Activated CD4-positive, alpha-beta memory T cell treated with anti-CD3 and anti-CD28 coated beads, Interleukin-2, amount 10 ng/mL, durations not matched to agents 7 days and 5 days (primary cell): ENCODE measurements at regions of chr6 and their contacts with region 1.

Region 1: DNA sequence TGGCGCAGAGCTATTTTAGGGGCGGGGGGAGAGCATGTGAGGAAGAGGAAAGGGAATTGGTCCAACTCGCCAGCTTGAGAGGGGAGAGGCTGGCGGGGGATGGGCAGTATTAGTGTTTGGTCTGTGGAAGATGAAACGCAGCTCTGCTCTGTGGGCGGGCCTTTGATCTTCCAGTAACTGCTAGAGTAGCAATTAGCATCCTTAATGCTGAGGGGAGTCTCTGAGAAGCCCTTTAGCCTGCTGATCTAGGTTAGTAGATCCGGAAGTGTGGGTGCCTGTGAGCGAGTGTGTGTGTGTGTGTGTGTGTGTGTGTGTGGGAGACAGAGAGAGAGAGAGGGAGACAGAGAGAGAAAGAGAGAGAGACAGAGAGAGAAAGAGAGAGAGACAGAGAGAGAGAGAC is 117.2 kb upstream of the BACH2 start:
- DNase-seq: peak; percentile 88
- H3K4me3 Mint-ChIP-seq: peak overlapping the region; percentile 82
- H3K27ac Mint-ChIP-seq: peak overlapping the region; percentile 97
- H3K4me1 Mint-ChIP-seq: peaks cover 86% of the 10 kb centered on the region
- H3K27me3 Mint-ChIP-seq: peaks cover 2% of the 10 kb centered on the region

Region 2: GRCh38 chr6:90256698-90257485 is 157.0 kb before region 1 on chr6:
- CTCF ChIA-PET with region 1: no interaction called
- POLR2A ChIA-PET with region 1: no interaction called
- DNase-seq: peak; percentile 35
- H3K4me3 Mint-ChIP-seq: no peak overlapping the region
- H3K27ac Mint-ChIP-seq: peak overlapping the region; percentile 63
- H3K4me1 Mint-ChIP-seq: peaks cover 32% of the 10 kb centered on the region
- H3K27me3 Mint-ChIP-seq: no peaks in the 10 kb centered on the region

Region 3: GRCh38 chr6:90296346-90297114 is 117.3 kb before region 1 on chr6 and contains the start of gene BACH2:
- CTCF ChIA-PET with region 1: no interaction called
- POLR2A ChIA-PET with region 1: interaction called, 20 read pairs
- DNase-seq: peak; percentile 95
- H3K4me3 Mint-ChIP-seq: peak within 1 kb of the TSS; percentile 87
- H3K27ac Mint-ChIP-seq: peak within 1 kb of the TSS; percentile 82
- H3K4me1 Mint-ChIP-seq: peaks cover 27% of the 10 kb centered on the region
- H3K27me3 Mint-ChIP-seq: peaks cover 44% of the 10 kb centered on the region
- total RNA-seq, gene BACH2: 30.3 to 31.1 TPM

Region 4: DNA sequence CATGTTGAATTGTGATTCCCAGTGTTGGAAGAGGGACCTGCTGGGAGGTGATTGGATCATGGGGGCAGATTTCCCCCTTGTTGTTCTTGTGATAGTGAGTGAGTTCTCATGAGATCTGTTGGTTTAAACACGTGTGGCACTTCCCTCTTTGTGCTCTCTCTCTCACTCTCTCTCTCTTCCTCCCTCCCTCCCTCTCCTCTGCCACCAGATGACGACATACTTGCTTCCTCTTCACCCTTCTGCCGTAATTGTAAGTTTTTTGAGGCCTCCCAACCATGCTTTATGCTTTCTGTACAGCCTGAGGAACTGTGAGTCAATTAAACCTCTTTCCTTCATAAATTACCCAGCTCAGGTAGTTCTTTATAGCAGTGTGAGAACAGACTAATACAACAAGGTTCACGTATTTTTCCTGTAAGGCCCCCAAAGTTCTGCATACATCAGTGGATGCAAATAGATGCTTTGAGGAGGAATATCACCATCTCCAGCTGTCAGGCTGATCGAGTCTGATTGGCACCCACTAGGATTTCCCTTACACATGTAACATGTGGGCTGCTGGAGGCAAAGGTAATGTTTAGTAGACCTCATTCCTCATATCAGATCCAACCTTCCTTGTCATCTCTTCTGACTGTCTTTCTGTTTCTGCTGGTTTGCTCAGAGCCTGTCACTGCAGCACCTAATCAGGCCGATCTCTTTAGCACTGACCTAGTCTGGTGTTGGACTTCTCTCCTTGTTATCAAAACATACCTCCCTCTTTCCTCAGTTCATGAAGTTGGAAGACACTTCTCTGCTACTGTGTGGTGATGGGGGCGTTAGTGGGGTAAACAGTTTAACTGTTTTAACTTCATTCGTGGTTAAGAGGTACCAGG is 62.9 kb before region 1 on chr6:
- CTCF ChIA-PET with region 1: no interaction called
- POLR2A ChIA-PET with region 1: no interaction called
- DNase-seq: peak; percentile 53
- H3K4me3 Mint-ChIP-seq: no peak overlapping the region
- H3K27ac Mint-ChIP-seq: peak overlapping the region; percentile 57
- H3K4me1 Mint-ChIP-seq: peaks cover 21% of the 10 kb centered on the region
- H3K27me3 Mint-ChIP-seq: peaks cover 23% of the 10 kb centered on the region

Region 5: GRCh38 chr6:90403489-90404381 is 10.1 kb before region 1 on chr6:
- CTCF ChIA-PET with region 1: interaction called, 94 read pairs
- POLR2A ChIA-PET with region 1: interaction called, 233 read pairs
- DNase-seq: no peak
- H3K4me3 Mint-ChIP-seq: peak overlapping the region; percentile 10
- H3K27ac Mint-ChIP-seq: peak overlapping the region; percentile 94
- H3K4me1 Mint-ChIP-seq: peaks cover 86% of the 10 kb centered on the region
- H3K27me3 Mint-ChIP-seq: peaks cover 5% of the 10 kb centered on the region

Region 6: GRCh38 chr6:90458353-90459224 is 44.7 kb after region 1 on chr6:
- CTCF ChIA-PET with region 1: interaction called, 14 read pairs
- POLR2A ChIA-PET with region 1: interaction called, 150 read pairs
- DNase-seq: peak; percentile 82
- H3K4me3 Mint-ChIP-seq: peak overlapping the region; percentile 56
- H3K27ac Mint-ChIP-seq: peak overlapping the region; percentile 89
- H3K4me1 Mint-ChIP-seq: peaks cover 74% of the 10 kb centered on the region
- H3K27me3 Mint-ChIP-seq: no peaks in the 10 kb centered on the region

Region 7: GRCh38 chr6:90466154-90466940 is 52.5 kb after region 1 on chr6:
- CTCF ChIA-PET with region 1: interaction called, 135 read pairs
- POLR2A ChIA-PET with region 1: interaction called, 192 read pairs
- DNase-seq: peak; percentile 53
- H3K4me3 Mint-ChIP-seq: peak overlapping the region; percentile 2
- H3K27ac Mint-ChIP-seq: peak overlapping the region; percentile 82
- H3K4me1 Mint-ChIP-seq: peaks cover 96% of the 10 kb centered on the region
- H3K27me3 Mint-ChIP-seq: peaks cover 10% of the 10 kb centered on the region

Region 8: DNA sequence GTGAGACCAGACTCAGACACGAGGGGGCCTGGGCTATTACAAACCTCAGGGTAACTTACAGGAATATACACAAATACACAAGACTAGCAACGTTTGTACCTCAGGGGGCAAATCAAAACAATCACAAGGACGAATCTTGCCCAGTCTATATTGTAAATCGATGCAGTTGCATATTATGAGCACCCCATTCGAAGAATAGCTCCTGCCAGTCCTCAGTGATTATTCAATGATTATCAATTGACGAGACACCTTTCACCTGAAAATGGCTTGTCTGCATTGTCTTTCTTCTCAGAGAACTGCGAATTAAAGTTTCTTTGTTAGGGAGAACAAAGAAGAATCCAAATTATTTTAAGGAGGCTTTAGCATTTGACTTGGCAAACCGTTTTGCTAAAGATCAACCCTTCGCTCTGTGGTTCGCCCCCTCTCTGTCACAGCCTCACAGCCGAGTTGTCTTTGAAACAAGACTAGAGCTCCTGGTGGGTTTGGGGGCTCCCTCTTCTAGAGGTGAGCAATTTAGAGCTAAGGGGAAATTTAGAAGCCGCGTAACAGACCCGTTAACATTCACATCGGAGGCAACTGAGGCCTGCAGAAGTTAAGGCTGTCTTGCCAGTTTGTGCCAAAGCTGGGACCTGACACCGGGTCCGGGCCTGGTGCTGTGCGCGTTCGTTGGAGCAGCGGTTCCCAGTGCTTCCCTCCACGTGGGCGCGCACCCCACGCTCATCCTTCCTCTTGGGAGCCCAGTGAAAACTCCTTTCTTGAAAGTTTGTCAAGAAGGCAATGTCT is 197.9 kb after region 1 on chr6:
- CTCF ChIA-PET with region 1: no interaction called
- POLR2A ChIA-PET with region 1: no interaction called
- DNase-seq: no peak
- H3K4me3 Mint-ChIP-seq: peak overlapping the region; percentile 79
- H3K27ac Mint-ChIP-seq: no peak overlapping the region
- H3K4me1 Mint-ChIP-seq: peaks cover 12% of the 10 kb centered on the region
- H3K27me3 Mint-ChIP-seq: peaks cover 71% of the 10 kb centered on the region